OCI-LY7 (cell line): ENCODE measurements at regions of chr1 and their contacts with region 1.

Region 1: DNA sequence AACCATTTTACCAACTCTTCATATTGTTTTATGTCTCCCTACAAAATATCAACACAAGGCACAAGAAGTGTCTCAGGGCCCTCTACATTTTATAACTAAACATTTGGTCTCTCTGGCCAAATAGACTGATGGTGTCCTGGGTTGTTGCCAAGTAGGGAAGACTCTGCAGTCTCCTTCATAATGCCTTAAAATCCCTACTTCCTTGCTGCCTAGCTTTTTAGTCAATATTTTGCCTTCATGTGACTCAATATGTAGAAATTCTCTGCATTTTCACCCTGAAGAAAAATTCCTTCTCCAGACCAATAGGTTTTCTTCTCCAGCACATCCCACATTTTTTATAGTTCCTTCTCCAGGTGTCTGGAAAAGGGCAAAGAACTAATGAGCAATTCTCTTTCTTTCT is 72.6 kb upstream of the IPO9 start:
- DNase-seq: no peak
- H3K4me3 ChIP-seq: peak overlapping the region; percentile 36
- H3K27ac ChIP-seq: peak overlapping the region; percentile 55
- H3K4me1 ChIP-seq: peaks cover 54% of the 10 kb centered on the region
- CTCF ChIP-seq: no peak

Region 2: GRCh38 chr1:201739492-201740085 is 16.8 kb before region 1 on chr1:
- CTCF ChIA-PET with region 1: no interaction called
- POLR2A ChIA-PET with region 1: interaction called, 6 read pairs
- intact Hi-C with region 1: loop called (anchors 2 kb)
- DNase-seq: peak; percentile 88
- H3K4me3 ChIP-seq: peak overlapping the region; percentile 83
- H3K27ac ChIP-seq: no peak overlapping the region
- H3K4me1 ChIP-seq: peaks cover 40% of the 10 kb centered on the region
- CTCF ChIP-seq: no peak